CD4-positive, alpha-beta memory T cell (primary cell): ENCODE measurements at regions of chr20 and their contacts with region 1.

Region 1: DNA sequence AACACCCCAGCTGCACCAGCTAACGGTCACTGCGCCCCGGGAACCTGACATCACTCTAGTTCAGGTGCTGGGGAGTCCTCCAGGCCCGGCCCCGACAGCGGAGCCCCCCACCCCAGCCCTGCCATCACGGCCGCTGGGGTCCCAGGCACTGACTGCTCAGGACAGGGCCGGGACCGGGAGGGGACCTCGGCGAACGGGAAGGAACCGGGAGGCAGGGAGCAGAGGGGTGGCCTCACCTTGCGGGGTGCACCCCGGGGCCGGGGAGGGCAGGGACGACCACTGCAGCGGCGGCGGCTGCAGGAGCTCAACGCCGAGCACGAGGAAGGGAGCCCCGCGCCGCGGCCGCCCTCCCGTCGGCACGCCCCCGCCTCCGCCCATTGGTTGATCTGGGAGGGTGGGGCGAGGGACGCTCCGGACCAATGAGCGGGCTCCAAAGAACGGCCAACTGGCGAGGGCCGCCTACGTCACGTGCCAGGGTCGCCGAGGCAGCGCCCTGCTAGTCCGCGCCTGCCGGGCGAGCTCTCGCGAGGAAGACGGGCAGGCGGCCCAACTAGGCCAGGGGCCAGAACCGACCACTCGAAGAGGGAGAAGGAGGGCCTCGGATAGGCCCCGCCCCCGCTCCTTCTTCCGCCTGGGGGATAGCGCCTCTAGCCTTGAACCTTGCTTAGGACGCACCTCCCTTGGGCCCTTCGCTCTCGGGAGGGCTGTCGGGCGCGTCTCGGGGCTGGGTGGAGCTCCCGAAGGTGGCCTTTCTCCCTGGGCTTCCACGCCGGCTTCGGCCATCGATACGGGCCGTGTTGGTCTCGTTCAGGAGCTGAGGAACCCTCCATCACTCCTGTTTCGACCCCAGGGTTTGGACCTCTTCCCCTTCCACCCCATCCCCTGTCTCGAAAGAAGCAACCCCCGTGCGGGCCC is at the start of gene ADISSP:
- DNase-seq: peak; percentile 93 to 96 (median 95)
- H3K4me3 ChIP-seq: peak within 1 kb of the TSS; percentile 69 to 90
- H3K4me3 Mint-ChIP-seq: peak within 1 kb of the TSS; percentile 86 to 94 (median 90)
- H3K27ac ChIP-seq: peak within 1 kb of the TSS; percentile 98
- H3K27ac Mint-ChIP-seq: peak within 1 kb of the TSS; percentile 96 to 99 (median 98)
- H3K4me1 ChIP-seq: peaks cover 25% of the 10 kb centered on the region
- H3K4me1 Mint-ChIP-seq: peaks cover 9 to 27% (median 17%) of the 10 kb centered on the region in 4 donors
- H3K27me3 ChIP-seq: no peaks in the 10 kb centered on the region
- H3K27me3 Mint-ChIP-seq: peaks cover 0 to 2% of the 10 kb centered on the region in 2 donors
- total RNA-seq, gene ADISSP: 15.7 to 17.3 TPM

Region 2: GRCh38 chr20:3658716-3659491 is 108.8 kb before region 1 on chr20:
- CTCF ChIA-PET with region 1: no interaction called
- POLR2A ChIA-PET with region 1: no interaction called
- intact Hi-C with region 1: no loop called
- DNase-seq: no peak
- H3K4me3 ChIP-seq: no peak overlapping the region
- H3K4me3 Mint-ChIP-seq: peak overlapping the region in 1 of 8 donors; percentile 30
- H3K27ac ChIP-seq: no peak overlapping the region
- H3K27ac Mint-ChIP-seq: peak overlapping the region in 1 of 7 donors; percentile 46
- H3K4me1 ChIP-seq: no peaks in the 10 kb centered on the region
- H3K4me1 Mint-ChIP-seq: peaks cover 6 to 20% (median 9%) of the 10 kb centered on the region in 4 donors
- H3K27me3 ChIP-seq: no peaks in the 10 kb centered on the region
- H3K27me3 Mint-ChIP-seq: peaks cover 26 to 28% of the 10 kb centered on the region in 2 donors

Region 3: GRCh38 chr20:3753098-3753980 is 14.3 kb before region 1 on chr20:
- CTCF ChIA-PET with region 1: interaction called, 64 read pairs
- POLR2A ChIA-PET with region 1: interaction called, 9 read pairs
- intact Hi-C with region 1: loop called (anchors 1 kb)
- DNase-seq: peak; percentile 51 to 61 (median 57)
- H3K4me3 ChIP-seq: no peak overlapping the region
- H3K4me3 Mint-ChIP-seq: peak overlapping the region in 1 of 8 donors; percentile 17
- H3K27ac ChIP-seq: no peak overlapping the region
- H3K27ac Mint-ChIP-seq: peak overlapping the region in 4 of 7 donors; percentile 53 to 84 (median 66)
- H3K4me1 ChIP-seq: no peaks in the 10 kb centered on the region
- H3K4me1 Mint-ChIP-seq: peaks cover 2 to 14% (median 12%) of the 10 kb centered on the region in 4 donors
- H3K27me3 ChIP-seq: no peaks in the 10 kb centered on the region
- H3K27me3 Mint-ChIP-seq: peaks cover 0 to 2% of the 10 kb centered on the region in 2 donors

Region 4: DNA sequence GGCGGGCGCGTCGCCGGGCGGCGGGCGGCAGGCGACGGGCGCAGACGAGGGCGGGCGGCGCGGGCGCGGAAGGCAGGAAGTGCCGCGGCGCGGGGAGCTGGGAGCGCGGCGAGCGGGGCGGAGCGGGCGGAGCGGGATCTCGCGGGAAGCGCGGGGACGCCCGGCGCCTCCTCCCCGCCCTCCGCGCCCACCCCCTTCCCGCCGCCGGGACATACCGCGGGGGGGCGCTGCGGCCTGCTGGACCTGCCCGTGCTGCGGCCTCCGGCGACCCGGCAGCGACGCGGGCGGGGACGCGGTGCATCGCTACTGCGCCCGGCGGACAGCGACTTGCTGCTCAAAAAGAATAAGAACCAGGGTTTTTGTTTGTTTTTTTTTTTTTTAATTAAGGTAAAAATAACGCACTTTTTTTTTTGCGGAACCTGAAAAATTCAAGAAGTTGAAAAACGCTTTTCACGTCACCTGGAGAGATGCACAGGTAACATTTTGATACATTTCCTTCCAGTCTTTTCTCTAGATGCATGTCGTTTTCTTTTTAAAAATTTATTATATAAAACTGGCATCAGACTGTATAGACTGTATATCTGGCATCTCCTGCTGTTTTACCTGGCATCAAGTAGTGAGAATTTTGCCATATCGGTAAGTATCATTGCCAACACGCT is 19.1 kb after region 1 on chr20 and contains the start of gene CENPB:
- CTCF ChIA-PET with region 1: interaction called, 27 read pairs
- POLR2A ChIA-PET with region 1: interaction called, 49 read pairs
- intact Hi-C with region 1: loop called (anchors 1 kb)
- DNase-seq: peak; percentile 82 to 94 (median 88)
- H3K4me3 ChIP-seq: peak within 1 kb of the TSS; percentile 29 to 38
- H3K4me3 Mint-ChIP-seq: peak within 1 kb of the TSS; percentile 74 to 87 (median 84)
- H3K27ac ChIP-seq: peak within 1 kb of the TSS; percentile 12
- H3K27ac Mint-ChIP-seq: peak within 1 kb of the TSS; percentile 79 to 93 (median 88)
- H3K4me1 ChIP-seq: peaks cover 37% of the 10 kb centered on the region
- H3K4me1 Mint-ChIP-seq: peaks cover 23 to 41% (median 33%) of the 10 kb centered on the region in 4 donors
- H3K27me3 ChIP-seq: no peaks in the 10 kb centered on the region
- H3K27me3 Mint-ChIP-seq: no peaks in the 10 kb centered on the region
- total RNA-seq, gene CENPB: 52.2 to 56.7 TPM

Region 5: GRCh38 chr20:3811467-3812258 is 44.0 kb after region 1 on chr20:
- CTCF ChIA-PET with region 1: interaction called, 5 read pairs
- POLR2A ChIA-PET with region 1: interaction called, 24 read pairs
- intact Hi-C with region 1: loop called (anchors 2 kb)
- DNase-seq: peak; percentile 92 to 97 (median 94)
- H3K4me3 ChIP-seq: peak overlapping the region in 1 of 2 donors; percentile 54
- H3K4me3 Mint-ChIP-seq: peak overlapping the region; percentile 83 to 94 (median 89)
- H3K27ac ChIP-seq: peak overlapping the region; percentile 89
- H3K27ac Mint-ChIP-seq: peak overlapping the region; percentile 97 to 100 (median 99)
- H3K4me1 ChIP-seq: peaks cover 90% of the 10 kb centered on the region
- H3K4me1 Mint-ChIP-seq: peaks cover 53 to 83% (median 69%) of the 10 kb centered on the region in 4 donors
- H3K27me3 ChIP-seq: no peaks in the 10 kb centered on the region
- H3K27me3 Mint-ChIP-seq: no peaks in the 10 kb centered on the region

Region 6: DNA sequence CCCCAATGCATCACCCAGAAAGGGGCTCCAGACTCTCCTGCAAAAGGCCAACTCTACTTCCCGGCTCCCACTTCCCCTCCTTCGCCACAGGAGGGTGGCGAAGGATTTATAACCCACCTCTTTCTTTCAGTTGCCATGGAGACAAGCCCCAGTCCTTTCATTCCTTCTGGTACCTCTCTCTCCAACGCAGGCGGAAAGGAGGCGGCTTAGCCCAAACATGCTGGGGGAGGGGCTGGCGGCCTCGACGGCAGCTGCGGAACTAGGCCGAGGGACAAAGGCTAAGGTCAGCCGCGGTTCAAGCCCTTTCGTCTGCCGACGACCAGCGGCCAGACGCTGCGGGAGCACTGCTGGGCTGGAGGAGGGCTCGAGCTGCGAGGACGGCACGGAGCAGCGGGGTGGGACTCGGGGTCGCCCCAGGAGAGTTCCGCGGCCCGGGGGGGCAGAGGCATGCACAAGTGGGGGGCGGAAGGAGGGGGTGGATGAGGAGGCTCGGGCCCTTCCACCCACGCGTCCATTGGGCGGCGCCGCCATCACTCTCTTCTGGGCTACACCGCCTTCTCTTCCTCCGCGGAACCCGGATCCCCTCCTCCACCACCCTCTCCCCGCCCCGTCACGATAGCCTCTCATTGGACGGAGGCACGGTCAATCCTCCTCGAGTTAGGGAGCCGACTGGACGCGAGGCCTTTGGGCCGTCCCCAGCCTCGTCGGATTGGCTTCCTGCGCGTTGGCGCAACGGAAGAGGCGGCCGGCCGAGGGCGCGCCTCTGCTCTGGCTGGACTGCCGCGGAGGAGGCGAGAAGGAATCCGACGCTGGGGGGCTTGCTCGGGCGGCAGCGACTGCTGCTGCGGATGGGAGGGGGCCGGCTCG is 121.2 kb after region 1 on chr20 and contains the start of gene PANK2:
- CTCF ChIA-PET with region 1: interaction called, 3 read pairs
- POLR2A ChIA-PET with region 1: no interaction called
- intact Hi-C with region 1: loop called (anchors 1 kb)
- DNase-seq: peak; percentile 95 to 98 (median 96)
- H3K4me3 ChIP-seq: peak within 1 kb of the TSS; percentile 96 to 98
- H3K4me3 Mint-ChIP-seq: peak within 1 kb of the TSS; percentile 96 to 100 (median 98)
- H3K27ac ChIP-seq: peak within 1 kb of the TSS; percentile 79
- H3K27ac Mint-ChIP-seq: peak within 1 kb of the TSS; percentile 96 to 98 (median 97)
- H3K4me1 ChIP-seq: peaks cover 46% of the 10 kb centered on the region
- H3K4me1 Mint-ChIP-seq: peaks cover 34 to 68% (median 47%) of the 10 kb centered on the region in 4 donors
- H3K27me3 ChIP-seq: no peaks in the 10 kb centered on the region
- H3K27me3 Mint-ChIP-seq: no peaks in the 10 kb centered on the region
- total RNA-seq, gene PANK2: 71.4 to 80.5 TPM